Activated CD8-positive, alpha-beta T cell treated with anti-CD3 and anti-CD28 coated beads, Interleukin-2, amount 10 ng/mL, durations not matched to agents 7 days and 5 days (primary cell): ENCODE measurements at regions of chr1 and their contacts with region 1.

Region 1: GRCh38 chr1:31944205-31945089 is 6.3 kb upstream of the PTP4A2 start:
- DNase-seq: peak; percentile 97
- ATAC-seq: peak; percentile 71
- H3K4me3 Mint-ChIP-seq: peak overlapping the region; percentile 77
- H3K27ac Mint-ChIP-seq: peak overlapping the region; percentile 95
- H3K4me1 Mint-ChIP-seq: peaks cover 66% of the 10 kb centered on the region
- H3K27me3 Mint-ChIP-seq: no peaks in the 10 kb centered on the region

Region 2: DNA sequence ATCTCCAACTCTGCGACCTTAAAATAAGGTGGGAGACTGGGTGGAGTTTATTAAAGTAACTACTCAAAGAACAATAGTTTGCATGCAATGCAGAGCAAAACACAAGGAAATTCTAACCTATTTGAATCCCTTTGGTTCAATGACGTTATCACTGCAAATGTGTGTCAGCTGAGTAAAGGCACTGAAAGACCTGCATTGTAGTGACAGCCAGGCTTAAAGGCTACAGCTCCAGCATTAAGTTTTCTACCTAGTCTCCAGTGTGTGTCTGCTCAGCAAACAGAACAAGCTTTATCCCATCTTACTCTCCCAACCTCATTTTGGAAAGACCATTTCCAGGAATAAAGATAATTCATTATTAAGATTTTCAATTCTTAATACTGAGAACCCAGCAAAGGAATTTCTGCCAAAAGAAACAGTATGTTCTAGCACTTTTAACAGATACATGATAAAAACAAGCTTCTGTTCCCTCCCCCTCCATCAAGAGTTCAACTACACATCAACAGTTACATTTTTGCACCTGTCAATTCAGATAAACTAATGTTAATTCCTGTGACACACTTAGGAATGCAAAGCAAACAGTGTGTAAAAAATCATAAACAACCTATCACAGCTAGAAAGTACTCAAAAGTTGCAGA is 20.4 kb before region 1 on chr1:
- CTCF ChIA-PET with region 1: interaction called, 26 read pairs
- POLR2A ChIA-PET with region 1: interaction called, 30 read pairs
- DNase-seq: no peak
- ATAC-seq: no peak
- H3K4me3 Mint-ChIP-seq: peak overlapping the region; percentile 37
- H3K27ac Mint-ChIP-seq: peak overlapping the region; percentile 81
- H3K4me1 Mint-ChIP-seq: peaks cover 78% of the 10 kb centered on the region
- H3K27me3 Mint-ChIP-seq: no peaks in the 10 kb centered on the region

Region 3: GRCh38 chr1:31931593-31932225 is 12.7 kb before region 1 on chr1:
- CTCF ChIA-PET with region 1: interaction called, 20 read pairs
- POLR2A ChIA-PET with region 1: interaction called, 52 read pairs
- DNase-seq: peak; percentile 18
- ATAC-seq: no peak
- H3K4me3 Mint-ChIP-seq: peak overlapping the region; percentile 59
- H3K27ac Mint-ChIP-seq: peak overlapping the region; percentile 71
- H3K4me1 Mint-ChIP-seq: peaks cover 78% of the 10 kb centered on the region
- H3K27me3 Mint-ChIP-seq: no peaks in the 10 kb centered on the region

Region 4: DNA sequence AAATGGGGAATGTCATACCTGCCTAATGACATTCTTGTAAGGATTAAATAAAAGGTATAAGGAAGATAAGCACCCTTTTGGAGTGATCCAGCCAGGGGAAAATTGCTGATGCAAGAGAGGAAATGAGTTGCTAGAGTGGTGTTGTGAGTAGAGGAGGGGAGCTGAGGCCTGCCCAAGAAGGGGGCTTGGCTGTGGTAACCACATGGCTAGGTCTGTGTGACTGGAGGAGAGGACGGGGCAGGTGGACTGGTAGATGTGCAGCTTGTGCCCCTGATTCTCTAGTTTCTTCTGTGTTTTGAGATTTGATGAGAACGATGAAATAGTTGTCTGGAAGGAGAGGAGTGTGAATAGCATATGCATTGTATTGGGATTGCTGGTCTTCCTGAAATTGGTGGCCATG is 241.6 kb after region 1 on chr1:
- CTCF ChIA-PET with region 1: no interaction called
- POLR2A ChIA-PET with region 1: no interaction called
- DNase-seq: no peak
- ATAC-seq: no peak
- H3K4me3 Mint-ChIP-seq: peak overlapping the region; percentile 2
- H3K27ac Mint-ChIP-seq: peak overlapping the region; percentile 86
- H3K4me1 Mint-ChIP-seq: peaks cover 47% of the 10 kb centered on the region
- H3K27me3 Mint-ChIP-seq: no peaks in the 10 kb centered on the region